ENCODE measurements at regions of chr6 and their contacts with region 1.

Region 1: GRCh38 chr6:7561153-7561964 is 19.9 kb downstream of the DSP start:
- DNase-seq: peak; percentile 50
- ATAC-seq: peak; percentile 90

Region 2: GRCh38 chr6:7424967-7425807 is 136.2 kb before region 1 on chr6:
- intact Hi-C with region 1: loop called (anchors 10 kb)
- DNase-seq: peak; percentile 72
- ATAC-seq: peak; percentile 92